Activated CD8-positive, alpha-beta memory T cell treated with anti-CD3 and anti-CD28 coated beads, Interleukin-2, amount 10 ng/mL, durations not matched to agents 7 days and 5 days (primary cell): ENCODE measurements at regions of chr19 and their contacts with region 1.

Region 1: DNA sequence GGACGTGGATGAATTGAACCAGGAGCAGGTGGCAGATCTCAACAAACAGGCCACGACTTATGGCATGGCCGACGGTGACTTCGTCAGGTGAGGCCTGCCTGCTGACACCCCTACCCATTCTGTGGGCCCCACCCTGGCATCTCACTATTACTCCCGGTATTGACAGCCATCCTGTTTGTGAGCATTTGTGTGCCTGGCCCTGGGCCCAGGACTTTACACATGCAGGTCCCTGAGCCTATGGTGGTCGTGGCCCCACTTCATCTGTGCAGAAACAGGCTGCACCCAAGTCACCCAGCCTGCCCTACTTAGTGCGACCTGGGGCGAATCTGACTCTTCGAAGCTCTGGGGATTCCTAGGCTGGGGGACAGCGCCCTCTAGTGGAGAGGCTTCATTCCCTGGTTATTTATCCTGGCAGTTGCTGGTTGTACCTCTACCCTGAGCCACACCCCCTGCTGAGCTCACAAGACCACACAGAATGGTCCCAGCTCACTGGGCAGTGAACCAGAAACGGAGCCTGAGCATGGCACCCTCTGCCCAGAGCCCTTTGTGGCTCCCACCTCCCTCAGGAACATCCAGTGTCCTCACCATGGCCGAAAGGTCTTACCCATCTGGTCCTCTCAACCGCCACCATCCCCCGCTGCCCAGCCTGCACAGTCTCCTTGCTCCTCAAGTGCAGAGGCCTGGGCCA is 16.9 kb downstream of the ZNF296 start:
- DNase-seq: peak; percentile 88
- ATAC-seq: peak; percentile 91
- H3K4me3 Mint-ChIP-seq: no peak overlapping the region
- H3K27ac Mint-ChIP-seq: peak overlapping the region; percentile 25
- H3K4me1 Mint-ChIP-seq: no peaks in the 10 kb centered on the region
- H3K27me3 Mint-ChIP-seq: no peaks in the 10 kb centered on the region

Region 2: DNA sequence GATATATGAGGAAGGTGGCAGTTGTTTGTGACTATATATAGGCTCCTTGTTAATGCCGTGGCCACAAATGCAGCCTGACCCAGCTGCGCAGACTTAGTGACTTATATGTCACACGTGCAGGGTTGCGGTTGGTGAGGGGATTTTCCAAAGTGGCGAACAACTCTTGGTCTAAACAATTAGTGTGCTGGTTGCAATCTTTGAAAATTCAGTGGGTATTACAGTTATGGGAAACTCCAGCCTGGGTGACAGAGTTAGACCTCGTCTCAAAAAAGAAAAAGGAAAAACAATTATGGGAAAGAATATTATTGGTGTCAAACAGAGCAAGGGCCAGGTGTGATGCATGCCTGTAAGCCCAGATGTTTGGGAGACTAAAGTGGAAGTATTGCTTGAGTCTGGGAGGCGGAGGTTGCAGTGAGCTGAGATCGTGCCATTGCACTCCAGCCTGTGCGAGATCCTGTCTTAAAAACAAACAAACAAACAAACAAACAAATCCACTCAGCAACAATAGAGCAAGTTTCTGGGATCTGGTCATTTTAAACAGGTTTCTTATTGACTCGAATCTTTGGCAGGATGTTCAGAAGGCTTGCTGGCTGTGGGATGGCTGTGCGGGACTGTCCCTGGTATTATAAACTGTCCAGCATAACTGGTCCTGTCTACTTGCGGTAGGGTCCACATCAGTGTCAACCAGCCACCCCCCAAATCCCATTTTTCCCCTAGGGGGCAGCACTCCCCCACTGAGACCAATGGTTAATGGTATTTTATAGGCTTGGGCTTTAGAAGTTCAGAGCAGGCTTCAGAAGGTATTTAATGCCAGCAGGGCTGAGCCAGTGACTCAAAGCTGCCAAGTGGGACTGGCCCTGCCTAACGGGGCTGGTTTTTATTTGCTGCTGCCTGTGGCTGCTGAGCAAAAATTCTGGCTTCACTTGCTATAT is 42.8 kb before region 1 on chr19:
- CTCF ChIA-PET with region 1: interaction called, 10 read pairs
- DNase-seq: peak; percentile 91
- ATAC-seq: peak; percentile 84
- H3K4me3 Mint-ChIP-seq: peak overlapping the region; percentile 57
- H3K27ac Mint-ChIP-seq: peak overlapping the region; percentile 80
- H3K4me1 Mint-ChIP-seq: peaks cover 19% of the 10 kb centered on the region
- H3K27me3 Mint-ChIP-seq: no peaks in the 10 kb centered on the region

Region 3: GRCh38 chr19:45047188-45047797 is 12.1 kb before region 1 on chr19:
- CTCF ChIA-PET with region 1: interaction called, 10 read pairs
- DNase-seq: no peak
- ATAC-seq: peak; percentile 45
- H3K4me3 Mint-ChIP-seq: no peak overlapping the region
- H3K27ac Mint-ChIP-seq: peak overlapping the region; percentile 70
- H3K4me1 Mint-ChIP-seq: peaks cover 34% of the 10 kb centered on the region
- H3K27me3 Mint-ChIP-seq: no peaks in the 10 kb centered on the region

Region 4: GRCh38 chr19:45079063-45079910 is 19.9 kb after region 1 on chr19 and contains the start of gene GEMIN7:
- CTCF ChIA-PET with region 1: interaction called, 16 read pairs
- DNase-seq: peak; percentile 83
- ATAC-seq: peak; percentile 55
- H3K4me3 Mint-ChIP-seq: peak within 1 kb of the TSS; percentile 96
- H3K27ac Mint-ChIP-seq: peak within 1 kb of the TSS; percentile 83
- H3K4me1 Mint-ChIP-seq: peaks cover 54% of the 10 kb centered on the region
- H3K27me3 Mint-ChIP-seq: no peaks in the 10 kb centered on the region
- total RNA-seq, gene GEMIN7: 26.2 to 34.4 TPM

Region 5: GRCh38 chr19:45200568-45200994 is 141.2 kb after region 1 on chr19:
- CTCF ChIA-PET with region 1: no interaction called
- DNase-seq: no peak
- ATAC-seq: no peak
- H3K4me3 Mint-ChIP-seq: no peak overlapping the region
- H3K27ac Mint-ChIP-seq: no peak overlapping the region
- H3K4me1 Mint-ChIP-seq: no peaks in the 10 kb centered on the region
- H3K27me3 Mint-ChIP-seq: no peaks in the 10 kb centered on the region